ENCODE measurements at regions of chr9 and their contacts with region 1.

Region 1: GRCh38 chr9:68584189-68585033 is 43.7 kb upstream of the TMEM252 start:
- DNase-seq: peak; percentile 93
- ATAC-seq: peak; percentile 100
- H3K4me3 ChIP-seq: peak overlapping the region in 1 of 5 experiments; percentile 25
- H3K4me3 Mint-ChIP-seq: peak overlapping the region; percentile 67
- H3K27ac ChIP-seq: no peak overlapping the region
- H3K27ac Mint-ChIP-seq: peak overlapping the region; percentile 76
- H3K4me1 ChIP-seq: peaks cover 10 to 12% of the 10 kb centered on the region in 2 donors
- H3K4me1 Mint-ChIP-seq: peaks cover 29% of the 10 kb centered on the region
- H3K27me3 ChIP-seq: no peaks in the 10 kb centered on the region
- H3K27me3 Mint-ChIP-seq: no peaks in the 10 kb centered on the region
- CTCF ChIP-seq: peak; percentile 100

Region 2: DNA sequence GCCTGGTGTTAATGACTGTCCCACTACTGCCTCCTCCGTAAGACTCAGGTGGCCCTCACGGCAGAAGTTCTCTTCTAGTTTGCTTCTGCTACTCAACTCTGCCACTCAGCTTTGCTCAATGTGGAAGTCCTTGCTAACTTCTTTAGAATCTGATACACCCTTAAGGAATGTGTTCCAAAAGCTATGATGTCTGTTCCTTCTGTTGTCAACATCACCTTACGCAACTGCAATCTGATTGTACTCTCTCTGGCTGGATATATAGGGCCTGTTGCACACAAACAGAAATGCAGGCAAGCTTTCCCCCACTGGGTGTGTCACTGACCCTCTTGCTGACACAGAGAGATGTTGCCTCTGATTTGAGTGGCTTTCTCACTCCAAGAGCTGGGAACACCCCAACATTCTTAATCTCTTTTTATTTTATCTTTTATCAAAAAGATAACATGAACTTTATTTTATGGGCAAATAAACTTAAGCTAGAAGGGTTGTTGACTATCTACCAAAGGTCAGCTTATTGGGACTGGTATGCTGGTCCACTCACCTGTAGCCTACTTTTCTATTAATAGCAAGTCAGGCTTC is 69.0 kb before region 1 on chr9:
- CTCF ChIA-PET with region 1: no interaction called
- POLR2A ChIA-PET with region 1: no interaction called
- intact Hi-C with region 1: no loop called
- DNase-seq: no peak
- ATAC-seq: no peak
- H3K4me3 ChIP-seq: no peak overlapping the region
- H3K4me3 Mint-ChIP-seq: no peak overlapping the region
- H3K27ac ChIP-seq: no peak overlapping the region
- H3K27ac Mint-ChIP-seq: no peak overlapping the region
- H3K4me1 ChIP-seq: no peaks in the 10 kb centered on the region
- H3K4me1 Mint-ChIP-seq: no peaks in the 10 kb centered on the region
- H3K27me3 ChIP-seq: peaks cover 0 to 3% (median 0%) of the 10 kb centered on the region in 4 experiments
- H3K27me3 Mint-ChIP-seq: peaks cover 11% of the 10 kb centered on the region
- CTCF ChIP-seq: no peak

Region 3: GRCh38 chr9:68643901-68644809 is 59.7 kb after region 1 on chr9:
- CTCF ChIA-PET with region 1: interaction called, 11 read pairs
- POLR2A ChIA-PET with region 1: interaction called, 3 read pairs
- intact Hi-C with region 1: loop called (anchors 2 kb)
- DNase-seq: peak; percentile 83
- ATAC-seq: peak; percentile 61
- H3K4me3 ChIP-seq: peak overlapping the region in 1 of 5 experiments; percentile 42
- H3K4me3 Mint-ChIP-seq: peak overlapping the region; percentile 70
- H3K27ac ChIP-seq: peak overlapping the region; percentile 91 to 97
- H3K27ac Mint-ChIP-seq: peak overlapping the region; percentile 91
- H3K4me1 ChIP-seq: peaks cover 83 to 91% of the 10 kb centered on the region in 2 donors
- H3K4me1 Mint-ChIP-seq: peaks cover 89% of the 10 kb centered on the region
- H3K27me3 ChIP-seq: no peaks in the 10 kb centered on the region
- H3K27me3 Mint-ChIP-seq: no peaks in the 10 kb centered on the region
- CTCF ChIP-seq: no peak

Region 4: DNA sequence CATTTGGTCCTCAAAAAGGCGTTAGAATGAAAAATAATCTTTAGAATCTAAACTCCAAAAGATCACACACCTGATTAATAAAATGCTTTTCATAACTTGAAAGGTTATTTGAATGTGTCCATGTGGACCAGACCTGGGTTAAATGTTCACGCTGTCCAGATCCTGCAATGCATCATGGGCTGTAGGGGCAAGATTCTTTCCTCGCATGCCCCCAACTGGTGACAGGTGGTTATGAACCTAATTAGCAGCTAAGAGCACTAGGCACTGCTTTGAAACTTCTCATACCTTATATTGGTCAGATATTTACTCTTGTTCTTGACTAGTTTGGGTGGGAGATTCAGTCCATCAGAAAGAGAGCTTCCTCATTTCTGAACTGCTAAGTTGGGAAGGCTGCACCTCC is 101.4 kb after region 1 on chr9:
- CTCF ChIA-PET with region 1: interaction called, 75 read pairs
- POLR2A ChIA-PET with region 1: no interaction called
- intact Hi-C with region 1: loop called (anchors 1 kb)
- DNase-seq: peak; percentile 73
- ATAC-seq: peak; percentile 93
- H3K4me3 ChIP-seq: no peak overlapping the region
- H3K4me3 Mint-ChIP-seq: no peak overlapping the region
- H3K27ac ChIP-seq: no peak overlapping the region
- H3K27ac Mint-ChIP-seq: no peak overlapping the region
- H3K4me1 ChIP-seq: peaks cover 32 to 40% of the 10 kb centered on the region in 2 donors
- H3K4me1 Mint-ChIP-seq: peaks cover 27% of the 10 kb centered on the region
- H3K27me3 ChIP-seq: peaks cover 0 to 5% (median 0%) of the 10 kb centered on the region in 4 experiments
- H3K27me3 Mint-ChIP-seq: no peaks in the 10 kb centered on the region
- CTCF ChIP-seq: peak; percentile 74

Region 5: DNA sequence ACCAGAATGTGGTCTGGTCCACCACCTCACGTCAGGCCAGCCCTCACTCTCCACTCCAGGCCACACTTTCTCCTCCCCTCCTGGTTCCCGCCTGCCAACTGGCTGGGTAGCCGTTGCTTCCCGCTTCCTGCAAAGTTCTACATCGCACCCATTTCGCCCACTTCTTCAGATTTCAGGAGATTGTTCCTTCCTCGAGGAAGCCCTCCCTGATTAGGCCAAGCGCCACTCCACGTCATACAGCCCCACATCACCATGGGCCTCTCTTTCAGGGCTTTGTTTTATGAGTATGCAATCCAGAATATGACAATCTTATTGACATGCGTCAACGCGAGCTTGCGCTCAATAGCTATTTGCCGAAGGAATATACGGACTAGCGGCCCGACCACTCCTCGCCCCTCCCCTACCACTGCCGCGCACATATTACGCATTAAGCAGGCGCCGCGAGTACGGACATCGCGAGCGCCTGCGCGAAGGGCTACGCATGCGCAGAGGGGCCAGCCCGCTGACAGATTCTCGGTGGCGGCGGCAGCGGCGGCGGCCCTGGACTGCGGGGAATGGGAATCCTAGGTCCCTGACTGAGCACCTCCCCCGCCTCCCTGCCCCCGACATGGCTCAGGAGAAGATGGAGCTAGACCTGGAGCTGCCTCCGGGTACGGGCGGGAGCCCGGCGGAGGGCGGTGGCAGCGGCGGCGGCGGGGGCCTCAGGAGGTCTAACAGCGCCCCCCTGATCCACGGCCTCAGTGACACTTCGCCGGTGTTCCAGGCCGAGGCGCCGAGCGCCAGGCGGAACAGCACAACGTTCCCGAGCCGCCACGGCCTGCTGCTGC is 195.4 kb after region 1 on chr9:
- CTCF ChIA-PET with region 1: interaction called, 13 read pairs
- POLR2A ChIA-PET with region 1: no interaction called
- intact Hi-C with region 1: loop called (anchors 1 kb)
- DNase-seq: peak; percentile 98
- ATAC-seq: peak; percentile 91
- H3K4me3 ChIP-seq: peak overlapping the region; percentile 61 to 92 (median 87)
- H3K4me3 Mint-ChIP-seq: no peak overlapping the region
- H3K27ac ChIP-seq: peak overlapping the region; percentile 91 to 95
- H3K27ac Mint-ChIP-seq: no peak overlapping the region
- H3K4me1 ChIP-seq: peaks cover 29 to 43% of the 10 kb centered on the region in 2 donors
- H3K4me1 Mint-ChIP-seq: peaks cover 9% of the 10 kb centered on the region
- H3K27me3 ChIP-seq: no peaks in the 10 kb centered on the region
- H3K27me3 Mint-ChIP-seq: no peaks in the 10 kb centered on the region
- CTCF ChIP-seq: peak; percentile 66

Region 6: DNA sequence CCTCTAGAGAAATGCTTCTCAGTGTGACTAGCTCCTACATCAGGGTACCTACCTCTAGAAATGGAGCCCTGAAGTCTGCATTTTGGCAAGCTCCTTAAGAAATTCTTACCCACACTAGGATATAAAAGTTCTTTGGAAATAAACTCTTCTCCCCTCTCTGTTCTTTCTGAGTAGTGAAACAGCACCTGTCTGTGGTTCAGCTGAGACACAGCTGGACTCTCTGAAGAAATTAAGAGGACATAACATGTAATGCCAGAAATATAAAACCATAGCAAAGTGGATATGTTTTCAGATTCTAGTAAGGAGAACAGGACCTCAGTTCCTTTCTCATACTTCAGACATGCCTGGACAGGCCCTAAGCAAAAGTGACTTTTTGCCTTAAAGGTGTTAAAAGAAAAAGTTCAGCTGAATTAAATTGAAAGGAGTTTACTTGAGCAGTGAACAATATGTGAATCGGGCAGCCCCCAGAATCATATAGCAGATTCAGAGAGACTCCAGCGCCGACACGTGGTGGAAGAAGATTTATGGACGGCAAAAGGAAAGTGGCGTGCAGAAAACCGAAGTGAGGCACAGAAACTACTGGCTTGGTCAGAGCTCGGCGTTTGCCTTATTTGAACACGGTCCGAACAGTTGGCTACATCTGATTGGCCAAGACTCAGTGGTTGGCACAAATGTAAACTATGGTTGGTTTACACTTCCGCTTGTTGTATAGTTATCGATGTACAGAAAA is 365.0 kb after region 1 on chr9:
- CTCF ChIA-PET with region 1: interaction called, 4 read pairs
- POLR2A ChIA-PET with region 1: no interaction called
- intact Hi-C with region 1: loop called (anchors 1 kb)
- DNase-seq: peak; percentile 46
- ATAC-seq: peak; percentile 31
- H3K4me3 ChIP-seq: no peak overlapping the region
- H3K4me3 Mint-ChIP-seq: no peak overlapping the region
- H3K27ac ChIP-seq: no peak overlapping the region
- H3K27ac Mint-ChIP-seq: no peak overlapping the region
- H3K4me1 ChIP-seq: peaks cover 7 to 9% of the 10 kb centered on the region in 2 donors
- H3K4me1 Mint-ChIP-seq: peaks cover 26% of the 10 kb centered on the region
- H3K27me3 ChIP-seq: no peaks in the 10 kb centered on the region
- H3K27me3 Mint-ChIP-seq: no peaks in the 10 kb centered on the region
- CTCF ChIP-seq: peak; percentile 17

Region 7: DNA sequence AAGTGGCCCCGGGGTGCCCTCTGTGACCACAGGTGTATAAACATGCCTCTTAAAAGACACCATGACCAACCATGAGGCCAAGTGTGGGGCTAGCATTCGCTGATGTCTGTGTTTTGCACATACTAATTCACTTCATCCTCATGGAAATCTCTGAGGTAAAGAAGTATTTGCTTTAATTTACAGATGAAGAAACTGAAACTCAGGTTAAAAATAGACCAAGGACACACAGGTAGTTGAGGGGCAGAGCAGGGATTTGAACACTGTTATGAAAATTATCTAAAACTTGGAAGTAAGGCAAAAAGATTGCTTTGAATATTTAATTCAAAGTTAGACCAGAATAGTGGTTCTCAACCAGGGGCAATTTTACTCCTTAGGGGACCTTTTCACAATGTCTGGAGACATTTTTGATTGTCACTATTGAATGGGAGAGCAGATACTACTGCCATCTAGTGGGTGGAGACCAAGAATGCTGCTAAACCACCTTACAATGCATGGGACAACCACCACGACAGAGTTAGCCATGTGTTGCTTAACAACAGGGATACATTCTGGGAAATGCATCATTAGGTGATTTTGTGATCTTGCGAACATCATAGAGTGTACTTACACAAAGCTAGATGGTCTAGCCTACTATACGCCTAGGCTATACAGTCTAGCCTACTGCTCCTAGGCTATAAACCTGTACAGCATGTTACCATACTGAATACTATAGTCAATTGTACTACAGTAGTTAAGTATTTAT is 443.1 kb after region 1 on chr9:
- CTCF ChIA-PET with region 1: interaction called, 3 read pairs
- POLR2A ChIA-PET with region 1: no interaction called
- intact Hi-C with region 1: loop called (anchors 1 kb)
- DNase-seq: peak; percentile 68
- ATAC-seq: peak; percentile 87
- H3K4me3 ChIP-seq: no peak overlapping the region
- H3K4me3 Mint-ChIP-seq: no peak overlapping the region
- H3K27ac ChIP-seq: no peak overlapping the region
- H3K27ac Mint-ChIP-seq: no peak overlapping the region
- H3K4me1 ChIP-seq: peaks cover 5% of the 10 kb centered on the region in 2 donors
- H3K4me1 Mint-ChIP-seq: peaks cover 7% of the 10 kb centered on the region
- H3K27me3 ChIP-seq: no peaks in the 10 kb centered on the region
- H3K27me3 Mint-ChIP-seq: no peaks in the 10 kb centered on the region
- CTCF ChIP-seq: peak; percentile 89

Region 8: DNA sequence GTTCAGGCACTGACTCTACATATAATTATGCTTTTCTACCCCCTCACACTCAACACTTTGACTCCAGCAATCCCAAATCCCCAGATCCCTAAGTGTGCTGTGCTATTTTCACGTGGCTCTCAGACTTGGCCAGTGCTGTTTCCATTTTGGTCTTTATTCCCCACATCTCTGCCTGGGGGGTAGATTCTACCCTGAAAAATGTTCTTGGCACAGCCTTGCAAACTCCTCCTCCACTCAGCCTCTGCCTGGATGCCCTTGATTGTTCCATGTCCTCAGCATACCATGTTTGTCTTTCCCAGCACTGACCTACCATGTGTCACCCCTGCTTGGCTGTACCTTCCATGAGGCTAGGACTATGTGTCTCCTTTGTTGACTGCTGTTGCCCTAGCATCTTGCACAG is 494.2 kb after region 1 on chr9:
- CTCF ChIA-PET with region 1: no interaction called
- POLR2A ChIA-PET with region 1: no interaction called
- intact Hi-C with region 1: no loop called
- DNase-seq: no peak
- ATAC-seq: no peak
- H3K4me3 ChIP-seq: no peak overlapping the region
- H3K4me3 Mint-ChIP-seq: no peak overlapping the region
- H3K27ac ChIP-seq: no peak overlapping the region
- H3K27ac Mint-ChIP-seq: no peak overlapping the region
- H3K4me1 ChIP-seq: no peaks in the 10 kb centered on the region
- H3K4me1 Mint-ChIP-seq: no peaks in the 10 kb centered on the region
- H3K27me3 ChIP-seq: no peaks in the 10 kb centered on the region
- H3K27me3 Mint-ChIP-seq: no peaks in the 10 kb centered on the region
- CTCF ChIP-seq: no peak

Region 9: DNA sequence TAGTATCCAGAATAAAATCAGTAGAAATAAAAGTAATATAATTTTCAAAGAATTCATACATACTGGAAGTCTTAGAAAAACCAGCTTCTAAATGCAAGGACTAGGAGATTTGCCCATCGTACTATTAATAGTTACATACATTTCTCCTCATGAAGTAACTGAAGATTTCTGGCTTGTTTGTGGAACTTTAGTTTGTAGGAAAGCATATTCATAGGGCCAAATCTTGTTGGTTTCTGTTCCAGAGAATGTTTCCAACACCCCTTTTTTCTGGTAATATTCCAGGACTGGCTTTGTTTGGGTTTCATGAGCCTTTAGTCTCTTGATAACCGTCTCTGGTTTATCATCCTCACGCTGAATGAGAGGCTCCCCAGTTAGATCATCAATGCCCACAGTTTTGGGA is 523.4 kb after region 1 on chr9:
- CTCF ChIA-PET with region 1: no interaction called
- POLR2A ChIA-PET with region 1: no interaction called
- intact Hi-C with region 1: no loop called
- DNase-seq: no peak
- ATAC-seq: no peak
- H3K4me3 ChIP-seq: no peak overlapping the region
- H3K4me3 Mint-ChIP-seq: no peak overlapping the region
- H3K27ac ChIP-seq: no peak overlapping the region
- H3K27ac Mint-ChIP-seq: no peak overlapping the region
- H3K4me1 ChIP-seq: no peaks in the 10 kb centered on the region
- H3K4me1 Mint-ChIP-seq: no peaks in the 10 kb centered on the region
- H3K27me3 ChIP-seq: no peaks in the 10 kb centered on the region
- H3K27me3 Mint-ChIP-seq: no peaks in the 10 kb centered on the region
- CTCF ChIP-seq: no peak

Region 10: DNA sequence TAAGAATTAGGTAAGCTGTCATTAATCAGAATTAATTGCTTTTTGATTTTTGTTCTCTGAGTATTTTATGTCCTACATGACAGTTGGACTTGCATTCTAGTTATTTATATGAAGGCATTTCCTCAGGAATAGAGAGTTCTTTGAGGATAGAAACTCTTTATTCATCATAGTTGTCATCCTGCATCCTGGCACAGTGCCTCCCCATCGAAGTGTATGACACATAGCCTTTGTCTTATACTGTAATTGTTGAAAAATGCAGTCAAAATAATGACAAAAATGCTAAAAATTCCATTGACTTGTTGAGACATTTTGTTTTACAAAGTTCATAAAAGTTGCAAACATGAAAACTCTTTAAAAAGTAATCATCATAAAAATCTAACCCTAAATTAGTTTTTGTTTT is 1272.7 kb after region 1 on chr9:
- CTCF ChIA-PET with region 1: no interaction called
- POLR2A ChIA-PET with region 1: no interaction called
- intact Hi-C with region 1: no loop called
- DNase-seq: no peak
- ATAC-seq: no peak
- H3K4me3 ChIP-seq: no peak overlapping the region
- H3K4me3 Mint-ChIP-seq: no peak overlapping the region
- H3K27ac ChIP-seq: no peak overlapping the region
- H3K27ac Mint-ChIP-seq: no peak overlapping the region
- H3K4me1 ChIP-seq: no peaks in the 10 kb centered on the region
- H3K4me1 Mint-ChIP-seq: no peaks in the 10 kb centered on the region
- H3K27me3 ChIP-seq: peaks cover 0 to 6% (median 0%) of the 10 kb centered on the region in 4 experiments
- H3K27me3 Mint-ChIP-seq: peaks cover 11% of the 10 kb centered on the region
- CTCF ChIP-seq: no peak